Posterior vena cava (tissue), 2 donors: ENCODE measurements at regions of chr10 and their contacts with region 1.

Region 1: DNA sequence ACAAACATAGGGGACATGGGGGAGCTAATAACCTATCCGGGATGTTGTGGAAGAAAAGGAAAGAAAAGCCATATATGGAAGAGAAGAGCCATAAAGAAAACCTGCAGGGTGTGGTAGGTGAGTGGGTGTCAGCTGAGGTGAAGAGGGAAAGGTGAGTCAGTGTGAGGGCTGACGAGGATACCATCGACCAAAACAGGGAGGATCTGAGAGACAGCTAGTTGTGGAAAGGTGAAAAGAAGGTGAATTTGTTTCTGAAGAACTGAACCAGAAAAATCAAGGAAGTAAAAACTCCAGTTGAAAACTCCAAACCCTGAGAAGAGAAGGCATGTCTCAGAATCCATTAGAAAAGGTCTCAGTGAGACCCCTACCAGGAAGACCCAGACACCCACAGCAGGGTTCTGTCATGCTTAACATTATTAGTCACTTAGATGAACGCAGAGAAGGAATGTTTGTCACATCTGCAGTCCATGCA is 4.1 kb downstream of the BLNK start:
- DNase-seq: no peak

Region 2: DNA sequence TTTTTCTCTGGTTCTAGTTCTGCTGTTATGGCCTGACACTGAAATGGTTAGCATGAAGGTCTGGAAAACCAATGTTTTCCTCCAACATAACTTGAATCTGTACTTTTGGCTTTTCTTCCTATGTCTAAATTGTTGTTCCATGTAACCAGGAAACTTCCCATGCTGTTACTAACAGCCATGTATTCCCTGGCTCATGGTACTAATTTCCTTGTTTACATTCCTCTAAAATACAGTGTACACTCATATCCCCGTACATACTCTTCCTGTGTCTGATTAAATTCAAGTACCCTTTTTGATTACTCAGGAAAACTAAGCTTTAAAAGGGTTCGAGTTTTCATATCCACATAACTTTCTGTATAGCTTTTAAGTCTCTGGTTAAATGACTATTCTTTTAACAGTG is 1085.5 kb before region 1 on chr10:
- intact Hi-C with region 1: no loop called
- DNase-seq: no peak

Region 3: GRCh38 chr10:95588025-95588424 is 679.2 kb before region 1 on chr10:
- intact Hi-C with region 1: no loop called
- DNase-seq: no peak

Region 4: DNA sequence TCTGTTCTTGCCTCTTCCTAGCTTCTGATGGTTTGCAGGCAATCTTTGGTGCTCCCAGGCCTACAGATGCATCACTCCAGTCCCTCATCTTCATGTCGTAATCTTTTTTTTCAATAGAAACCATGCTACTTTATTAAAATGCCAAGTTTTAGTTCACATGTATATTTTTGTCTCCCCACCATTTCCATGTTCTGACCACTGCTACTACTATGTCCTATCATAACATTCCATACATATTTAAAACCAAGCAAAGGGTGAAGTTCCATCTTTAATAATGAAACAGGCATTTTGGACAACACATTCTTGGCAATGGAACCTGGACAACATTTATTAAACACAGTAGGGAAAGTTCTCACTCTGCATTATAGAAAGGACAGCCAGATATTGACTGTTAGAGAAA is 78.4 kb before region 1 on chr10:
- intact Hi-C with region 1: loop called in 1 of 2 experiments (anchors 2 kb)
- DNase-seq: no peak